Motor neuron (in vitro differentiated cells): ENCODE measurements at regions of chr12 and their contacts with region 1.

Region 1: GRCh38 chr12:45388545-45388944 is 172.7 kb downstream of the ANO6 start:
- ATAC-seq: peak in 4 of 8 experiments; percentile 32 to 60 (median 39)
- H3K4me3 ChIP-seq: no peak overlapping the region
- H3K27ac ChIP-seq: no peak overlapping the region
- H3K4me1 ChIP-seq: no peaks in the 10 kb centered on the region

Region 2: GRCh38 chr12:45183246-45183645 is 205.3 kb before region 1 on chr12:
- in situ Hi-C with region 1: loop called in 3 of 9 experiments (anchors 25 kb)
- ATAC-seq: no peak
- H3K4me3 ChIP-seq: no peak overlapping the region
- H3K27ac ChIP-seq: no peak overlapping the region
- H3K4me1 ChIP-seq: no peaks in the 10 kb centered on the region

Region 3: DNA sequence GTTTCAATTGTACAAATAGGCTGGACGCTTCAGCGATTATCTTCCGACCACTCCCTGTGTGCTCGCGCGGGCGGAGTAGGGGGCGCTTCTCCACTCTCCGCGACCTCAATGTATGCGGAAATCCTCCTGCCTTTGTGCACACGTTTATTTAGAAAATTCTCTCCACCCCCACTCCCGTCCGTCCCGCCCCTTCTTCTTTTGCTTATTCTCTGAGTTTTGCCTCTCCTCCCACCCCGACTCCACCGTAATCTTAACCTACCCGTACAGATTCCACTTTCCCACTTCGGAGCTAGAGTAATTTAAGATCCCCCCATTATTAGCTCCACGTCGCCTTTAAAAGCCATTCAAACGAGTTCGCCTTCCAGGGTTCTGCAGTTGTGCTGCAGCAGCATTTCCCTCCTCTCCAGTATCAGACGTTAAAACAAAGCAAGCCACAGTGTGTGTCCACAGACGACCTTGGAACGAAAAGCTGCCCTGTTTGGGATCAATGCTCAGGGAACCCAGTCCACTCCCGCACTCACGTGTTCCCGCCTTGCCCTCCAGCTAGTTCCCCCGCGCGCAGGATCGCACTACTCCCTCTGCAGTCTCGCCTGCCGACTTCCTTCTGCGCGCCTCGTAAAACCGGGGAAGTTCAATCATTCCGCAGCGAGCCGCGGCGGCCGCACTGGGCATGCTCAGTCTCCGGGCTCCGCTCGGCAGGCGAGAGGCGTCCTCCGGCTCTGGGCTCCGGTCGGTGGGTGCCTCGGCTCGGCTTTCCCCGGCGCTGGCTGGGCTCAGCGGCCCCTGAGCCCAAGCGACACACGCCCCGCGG is 172.9 kb before region 1 on chr12 and contains the start of gene ANO6:
- in situ Hi-C with region 1: loop called in 1 of 9 experiments (anchors 25 kb)
- ATAC-seq: peak; percentile 78 to 88 (median 83)
- H3K4me3 ChIP-seq: peak within 1 kb of the TSS; percentile 68 to 89 (median 81)
- H3K27ac ChIP-seq: peak within 1 kb of the TSS; percentile 68 to 85
- H3K4me1 ChIP-seq: peaks cover 7 to 15% of the 10 kb centered on the region in 2 donors
- total RNA-seq, gene ANO6: 13.2 to 64.7 (median 27.4) TPM

Region 4: DNA sequence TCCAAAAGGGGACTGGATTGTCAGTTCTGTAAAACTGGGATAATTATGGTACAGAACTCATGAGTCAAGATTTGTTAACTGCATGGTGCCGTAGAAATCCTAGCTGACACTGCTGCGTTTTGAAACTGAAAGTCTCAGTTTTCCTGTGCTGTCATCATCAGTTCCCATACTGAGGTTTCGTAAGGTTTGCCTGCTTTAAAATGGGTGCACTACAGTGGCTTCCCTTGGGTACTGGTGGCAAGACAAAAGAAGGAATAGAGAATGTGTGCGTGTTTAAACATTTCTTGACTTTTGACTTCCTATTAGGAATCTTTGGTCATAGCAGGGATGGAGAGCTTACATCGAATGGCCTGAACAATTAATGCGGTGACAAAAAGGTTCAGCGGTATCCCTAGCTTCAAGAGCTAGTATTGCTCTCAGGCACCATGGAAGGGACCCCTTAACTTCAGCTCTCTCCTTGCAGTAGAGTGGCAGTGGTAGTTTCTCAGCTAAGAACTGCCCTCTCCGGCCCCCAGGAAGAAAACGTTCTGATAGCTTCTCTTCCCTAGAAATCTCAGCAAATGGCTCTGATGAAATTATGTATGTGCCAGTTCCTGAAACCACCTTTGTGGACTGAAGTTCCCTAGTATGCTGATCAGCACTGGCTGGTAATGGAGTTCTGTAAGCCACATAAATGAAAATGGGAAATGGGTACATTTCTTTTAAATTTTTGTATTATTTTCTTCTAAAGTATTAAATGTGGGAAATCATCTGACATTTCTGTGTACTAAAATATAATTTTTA is 143.8 kb before region 1 on chr12:
- in situ Hi-C with region 1: no loop called
- ATAC-seq: peak in 1 of 8 experiments; percentile 37
- H3K4me3 ChIP-seq: no peak overlapping the region
- H3K27ac ChIP-seq: no peak overlapping the region
- H3K4me1 ChIP-seq: no peaks in the 10 kb centered on the region